Activated CD4-positive, alpha-beta memory T cell treated with anti-CD3 and anti-CD28 coated beads for 36 hours (primary cell): ENCODE measurements at regions of chr1 and their contacts with region 1.

Region 1: GRCh38 chr1:33256701-33257399 is 558 bp downstream of the ZNF362 start:
- DNase-seq: peak; percentile 70
- H3K4me3 Mint-ChIP-seq: peak overlapping the region; percentile 98
- H3K27ac Mint-ChIP-seq: peak overlapping the region; percentile 96
- H3K4me1 Mint-ChIP-seq: peaks cover 38% of the 10 kb centered on the region
- H3K27me3 Mint-ChIP-seq: no peaks in the 10 kb centered on the region

Region 2: GRCh38 chr1:33119532-33120217 is 137.2 kb before region 1 on chr1:
- CTCF ChIA-PET with region 1: no interaction called
- POLR2A ChIA-PET with region 1: no interaction called
- intact Hi-C with region 1: no loop called
- DNase-seq: no peak
- H3K4me3 Mint-ChIP-seq: no peak overlapping the region
- H3K27ac Mint-ChIP-seq: no peak overlapping the region
- H3K4me1 Mint-ChIP-seq: no peaks in the 10 kb centered on the region
- H3K27me3 Mint-ChIP-seq: no peaks in the 10 kb centered on the region

Region 3: DNA sequence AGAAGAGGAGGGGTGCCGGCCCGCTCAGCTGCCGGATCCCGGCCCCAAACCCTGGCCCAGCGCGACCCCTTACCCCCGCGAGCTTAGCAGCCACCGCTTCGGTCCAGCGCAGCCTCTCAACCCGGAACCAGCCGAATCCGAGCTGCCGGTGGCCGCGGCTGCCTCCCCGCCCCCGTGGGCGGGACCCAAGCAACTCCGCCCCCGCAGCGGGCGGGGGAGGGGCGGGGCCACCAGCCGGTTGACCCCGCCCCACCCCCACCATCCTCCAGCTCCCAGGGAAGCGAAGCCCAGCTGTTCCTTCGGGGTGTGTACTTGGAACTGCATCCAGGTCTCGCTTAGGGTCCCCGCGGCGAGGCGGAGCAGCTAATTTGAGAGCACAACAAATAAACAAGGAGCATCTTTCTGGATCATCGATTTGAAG is 74.9 kb before region 1 on chr1 and contains the start of gene TRIM62:
- CTCF ChIA-PET with region 1: no interaction called
- POLR2A ChIA-PET with region 1: interaction called, 5 read pairs
- intact Hi-C with region 1: loop called (anchors 2 kb)
- DNase-seq: peak; percentile 78
- H3K4me3 Mint-ChIP-seq: peak within 1 kb of the TSS; percentile 83
- H3K27ac Mint-ChIP-seq: no peak within 1 kb of the TSS
- H3K4me1 Mint-ChIP-seq: peaks cover 14% of the 10 kb centered on the region
- H3K27me3 Mint-ChIP-seq: peaks cover 6% of the 10 kb centered on the region
- total RNA-seq, gene TRIM62: 3.6 to 3.9 TPM

Region 4: DNA sequence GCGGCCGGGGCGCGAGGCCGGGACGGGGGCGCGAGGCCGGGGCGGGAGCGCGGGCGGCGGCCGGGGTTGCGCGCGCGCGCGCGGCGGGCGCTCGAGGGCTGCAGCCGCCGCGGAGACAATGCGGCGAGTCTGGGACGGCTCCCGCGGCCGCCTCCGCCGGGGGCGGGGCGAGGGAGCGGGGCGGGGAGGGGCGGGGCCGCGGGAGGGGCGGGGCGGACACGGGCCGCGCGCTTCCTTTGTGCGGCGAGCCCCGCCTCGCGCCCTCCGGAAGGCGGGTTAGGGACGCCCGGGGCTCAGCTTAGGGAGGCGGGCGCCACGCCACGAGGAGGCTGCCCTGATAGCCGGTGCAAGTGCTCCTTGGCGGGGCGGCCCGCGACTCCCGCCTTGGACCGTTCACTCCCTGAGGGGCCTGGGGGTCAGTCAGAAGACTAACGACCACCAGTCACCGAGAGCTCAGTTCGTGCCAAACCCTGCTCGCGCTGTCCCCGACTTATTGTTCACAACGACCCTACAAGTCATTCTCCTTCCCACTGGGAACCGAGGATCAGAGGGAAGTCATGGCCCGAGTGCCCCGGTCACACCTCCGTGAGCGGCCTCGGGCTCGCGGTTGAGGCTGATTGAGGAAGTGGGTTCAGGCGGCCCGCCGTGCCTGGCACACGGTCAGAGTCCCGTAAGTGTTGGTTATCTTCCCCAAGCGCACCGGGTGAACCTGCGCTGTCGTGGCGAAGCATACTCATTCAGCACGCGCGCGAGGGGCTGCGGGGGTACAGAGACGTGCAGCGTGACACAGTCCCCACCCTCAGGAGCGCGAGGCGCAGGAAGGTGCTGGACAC is 93.1 kb after region 1 on chr1:
- CTCF ChIA-PET with region 1: no interaction called
- POLR2A ChIA-PET with region 1: no interaction called
- intact Hi-C with region 1: loop called (anchors 5 kb)
- DNase-seq: peak; percentile 84
- H3K4me3 Mint-ChIP-seq: peak overlapping the region; percentile 91
- H3K27ac Mint-ChIP-seq: peak overlapping the region; percentile 94
- H3K4me1 Mint-ChIP-seq: peaks cover 46% of the 10 kb centered on the region
- H3K27me3 Mint-ChIP-seq: no peaks in the 10 kb centered on the region